Heart right ventricle (tissue), 16 donors: ENCODE measurements at regions of chr9 and their contacts with region 1.

Region 1: DNA sequence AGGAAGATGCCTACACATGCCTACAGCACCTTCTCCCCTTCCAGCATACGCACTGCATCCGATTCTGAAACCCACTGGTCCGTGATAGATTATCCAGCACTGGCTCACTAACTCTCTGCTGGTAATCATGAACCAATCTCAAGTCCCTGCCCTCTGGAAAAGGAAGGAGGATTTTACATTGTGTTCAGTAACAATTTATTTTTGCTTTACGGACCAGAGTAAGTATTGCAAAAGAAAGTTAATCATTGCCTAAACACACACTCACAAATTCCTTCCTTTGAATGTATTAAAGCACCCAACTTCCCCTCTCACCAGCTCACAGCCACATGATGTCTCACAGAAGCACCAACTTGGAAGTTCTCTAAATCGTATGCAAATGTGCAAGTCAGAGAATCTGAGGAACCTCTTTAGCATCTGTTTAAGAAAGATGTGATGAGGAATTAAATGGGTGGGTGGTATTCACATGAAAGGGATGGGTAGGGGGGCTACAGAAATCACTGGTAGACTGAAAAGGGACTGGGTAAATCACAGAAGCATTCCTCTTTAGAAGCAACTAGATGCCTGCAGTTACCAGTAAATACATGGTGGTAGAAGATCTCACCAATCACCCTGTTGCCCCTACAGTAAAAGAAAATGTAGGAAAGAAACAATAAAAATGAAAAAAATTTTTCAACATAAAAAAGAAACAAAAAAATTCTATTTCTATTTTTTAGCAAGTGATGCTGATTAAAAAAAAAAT is 8.4 kb downstream of the GNAQ start:
- DNase-seq: no peak
- ATAC-seq: peak in 6 of 8 donors; percentile 43 to 74 (median 56)
- H3K4me3 ChIP-seq: peak overlapping the region in 4 of 10 donors; percentile 3 to 34 (median 14)
- H3K27ac ChIP-seq: peak overlapping the region in 6 of 10 donors; percentile 47 to 76 (median 70)
- H3K4me1 ChIP-seq: peaks cover 2 to 90% (median 61%) of the 10 kb centered on the region in 9 donors
- H3K27me3 ChIP-seq: no peaks in the 10 kb centered on the region
- CTCF ChIP-seq: no peak

Region 2: GRCh38 chr9:77848897-77849296 is 174.3 kb before region 1 on chr9:
- intact Hi-C with region 1: no loop called
- DNase-seq: peak; percentile 23 to 39
- ATAC-seq: peak; percentile 62 to 94 (median 76)
- H3K4me3 ChIP-seq: no peak overlapping the region
- H3K27ac ChIP-seq: peak overlapping the region in 9 of 10 donors; percentile 51 to 81 (median 62)
- H3K4me1 ChIP-seq: peaks cover 5 to 89% (median 58%) of the 10 kb centered on the region in 9 donors
- H3K27me3 ChIP-seq: no peaks in the 10 kb centered on the region
- CTCF ChIP-seq: no peak

Region 3: DNA sequence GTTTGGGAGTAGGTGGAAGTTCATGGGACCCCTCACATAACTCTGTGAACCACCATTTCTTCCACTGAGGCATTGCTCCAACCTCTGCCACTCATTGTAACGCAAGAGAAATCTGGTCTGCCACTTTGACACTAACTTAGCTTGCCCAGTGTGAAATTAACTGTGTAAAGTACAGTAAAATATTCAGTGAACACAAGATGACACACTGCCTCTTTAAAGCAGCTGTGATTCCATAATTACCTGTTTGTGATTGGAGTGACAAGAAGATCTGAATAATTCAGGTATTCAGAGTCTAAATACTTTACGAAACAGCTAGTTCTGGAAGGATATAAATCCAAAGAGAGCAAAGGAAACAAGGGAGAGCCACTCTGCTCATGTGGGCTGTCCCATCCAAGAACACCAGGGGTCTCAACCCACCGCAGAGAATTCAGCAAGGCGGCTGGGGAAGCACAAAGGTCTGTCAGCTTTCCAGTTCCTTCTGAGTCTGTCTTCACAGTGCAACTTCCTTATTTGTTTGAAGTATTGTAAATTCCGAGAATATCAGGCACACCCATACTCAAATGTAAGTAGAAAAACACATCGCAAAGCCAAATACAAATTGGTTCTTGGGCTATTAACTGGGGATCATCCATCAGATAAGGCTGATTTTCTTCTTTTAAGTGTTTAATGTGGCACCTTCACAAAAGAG is 78.5 kb before region 1 on chr9:
- intact Hi-C with region 1: loop called in 1 of 10 experiments (anchors 10 kb)
- DNase-seq: peak in 1 of 2 donors; percentile 34
- ATAC-seq: peak; percentile 38 to 80 (median 68)
- H3K4me3 ChIP-seq: peak overlapping the region in 3 of 10 donors; percentile 1 to 8 (median 8)
- H3K27ac ChIP-seq: peak overlapping the region in 9 of 10 donors; percentile 6 to 87 (median 67)
- H3K4me1 ChIP-seq: peaks cover 2 to 70% (median 45%) of the 10 kb centered on the region in 9 donors
- H3K27me3 ChIP-seq: no peaks in the 10 kb centered on the region
- CTCF ChIP-seq: peak in 6 of 9 donors; percentile 5 to 46 (median 24)

Region 4: GRCh38 chr9:77987081-77987656 is 36.0 kb before region 1 on chr9:
- intact Hi-C with region 1: no loop called
- DNase-seq: no peak
- ATAC-seq: no peak
- H3K4me3 ChIP-seq: no peak overlapping the region
- H3K27ac ChIP-seq: no peak overlapping the region
- H3K4me1 ChIP-seq: peaks cover 0 to 58% (median 26%) of the 10 kb centered on the region in 9 donors
- H3K27me3 ChIP-seq: no peaks in the 10 kb centered on the region
- CTCF ChIP-seq: no peak

Region 5: GRCh38 chr9:78239506-78239905 is 216.3 kb after region 1 on chr9:
- intact Hi-C with region 1: no loop called
- DNase-seq: no peak
- ATAC-seq: no peak
- H3K4me3 ChIP-seq: no peak overlapping the region
- H3K27ac ChIP-seq: no peak overlapping the region
- H3K4me1 ChIP-seq: peaks cover 0 to 20% (median 6%) of the 10 kb centered on the region in 9 donors
- H3K27me3 ChIP-seq: no peaks in the 10 kb centered on the region
- CTCF ChIP-seq: peak in 1 of 9 donors; percentile 16